Activated CD4-positive, alpha-beta T cell treated with anti-CD3 and anti-CD28 coated beads, Interleukin-2, amount 10 ng/mL, durations not matched to agents 7 days and 5 days (primary cell): ENCODE measurements at regions of chr1 and their contacts with region 1.

Region 1: DNA sequence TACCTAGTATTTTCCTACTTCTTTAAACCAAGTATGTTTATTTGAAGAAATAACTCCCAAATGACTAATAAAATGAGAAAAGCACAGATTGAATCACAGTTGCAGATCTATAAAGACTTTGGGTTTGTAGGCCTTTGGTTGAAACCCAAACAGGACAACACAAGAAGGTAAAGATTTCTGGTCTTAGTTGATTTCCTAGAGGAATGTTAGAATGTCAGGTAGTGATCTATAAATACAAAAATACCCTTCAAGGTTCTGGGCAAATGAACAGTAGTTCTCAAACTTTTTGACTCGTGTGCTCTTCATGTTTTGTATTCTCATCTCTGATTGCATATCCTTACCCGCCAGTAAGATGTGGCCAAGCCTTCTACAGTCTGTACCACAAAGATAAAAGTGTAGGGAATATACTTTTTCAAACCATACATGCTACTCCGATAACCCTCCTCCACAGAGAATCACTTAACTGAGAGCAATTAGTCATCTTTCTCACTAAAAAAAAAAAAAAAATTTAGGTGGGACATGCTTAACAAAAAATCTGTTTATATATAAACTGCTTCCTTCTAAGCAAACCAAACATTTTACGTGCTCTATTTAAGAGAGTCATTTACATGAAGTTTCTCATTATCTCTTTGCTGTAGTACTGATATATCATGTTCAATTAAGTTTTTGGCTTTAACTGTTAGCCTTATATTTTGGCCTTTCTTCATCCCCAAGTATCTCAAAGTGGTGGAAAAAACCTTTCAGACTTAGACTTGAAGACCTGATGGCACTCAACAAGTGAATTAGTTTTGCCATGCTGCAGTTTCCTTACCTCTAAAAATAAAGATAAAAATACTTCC is 36.0 kb downstream of the CNIH4 start:
- DNase-seq: no peak
- H3K4me3 Mint-ChIP-seq: no peak overlapping the region
- H3K27ac Mint-ChIP-seq: no peak overlapping the region
- H3K4me1 Mint-ChIP-seq: peaks cover 25% of the 10 kb centered on the region
- H3K27me3 Mint-ChIP-seq: no peaks in the 10 kb centered on the region

Region 2: DNA sequence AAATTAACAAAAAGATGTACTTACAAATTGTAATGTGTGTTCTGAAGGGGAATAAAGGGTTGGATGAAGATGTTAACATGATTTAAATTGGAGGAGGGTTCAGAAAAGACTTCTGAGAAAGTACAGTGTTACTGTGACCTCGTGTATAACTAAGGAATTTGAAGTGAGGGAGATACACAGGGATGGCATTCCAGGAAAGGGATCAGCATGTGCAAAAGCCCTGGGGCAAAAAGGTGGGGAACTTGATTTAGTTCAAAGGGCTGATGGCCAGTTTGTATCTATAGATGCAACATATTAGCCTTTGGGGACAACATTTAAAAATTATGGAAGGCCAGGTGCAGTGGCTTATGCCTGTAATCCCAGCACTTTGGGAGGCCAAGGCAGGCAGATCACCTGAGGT is 242.9 kb before region 1 on chr1:
- CTCF ChIA-PET with region 1: no interaction called
- POLR2A ChIA-PET with region 1: no interaction called
- DNase-seq: no peak
- H3K4me3 Mint-ChIP-seq: no peak overlapping the region
- H3K27ac Mint-ChIP-seq: no peak overlapping the region
- H3K4me1 Mint-ChIP-seq: peaks cover 19% of the 10 kb centered on the region
- H3K27me3 Mint-ChIP-seq: no peaks in the 10 kb centered on the region

Region 3: GRCh38 chr1:224203243-224204016 is 189.2 kb before region 1 on chr1:
- CTCF ChIA-PET with region 1: no interaction called
- POLR2A ChIA-PET with region 1: no interaction called
- DNase-seq: no peak
- H3K4me3 Mint-ChIP-seq: no peak overlapping the region
- H3K27ac Mint-ChIP-seq: peak overlapping the region; percentile 57
- H3K4me1 Mint-ChIP-seq: peaks cover 17% of the 10 kb centered on the region
- H3K27me3 Mint-ChIP-seq: no peaks in the 10 kb centered on the region

Region 4: DNA sequence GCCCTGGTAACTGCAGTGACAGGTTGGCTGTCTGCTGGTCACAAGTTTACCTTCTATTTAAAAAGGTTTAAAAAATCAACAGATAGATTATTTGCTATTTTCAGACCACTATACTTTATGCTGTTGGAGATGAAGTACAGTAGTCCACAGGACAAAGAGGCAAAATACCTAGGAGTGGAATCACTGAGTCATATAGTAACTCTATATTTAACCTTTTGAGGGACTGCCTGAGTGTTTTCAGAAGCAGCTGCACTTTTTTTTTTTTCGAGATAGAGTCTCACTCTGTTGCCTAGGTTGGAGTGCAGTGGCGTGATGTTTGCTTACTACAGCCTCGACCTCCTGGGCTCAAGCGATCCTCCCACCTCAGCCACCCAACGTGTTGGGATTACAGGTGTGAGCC is 24.2 kb before region 1 on chr1:
- CTCF ChIA-PET with region 1: no interaction called
- POLR2A ChIA-PET with region 1: no interaction called
- DNase-seq: no peak
- H3K4me3 Mint-ChIP-seq: no peak overlapping the region
- H3K27ac Mint-ChIP-seq: no peak overlapping the region
- H3K4me1 Mint-ChIP-seq: peaks cover 22% of the 10 kb centered on the region
- H3K27me3 Mint-ChIP-seq: no peaks in the 10 kb centered on the region

Region 5: DNA sequence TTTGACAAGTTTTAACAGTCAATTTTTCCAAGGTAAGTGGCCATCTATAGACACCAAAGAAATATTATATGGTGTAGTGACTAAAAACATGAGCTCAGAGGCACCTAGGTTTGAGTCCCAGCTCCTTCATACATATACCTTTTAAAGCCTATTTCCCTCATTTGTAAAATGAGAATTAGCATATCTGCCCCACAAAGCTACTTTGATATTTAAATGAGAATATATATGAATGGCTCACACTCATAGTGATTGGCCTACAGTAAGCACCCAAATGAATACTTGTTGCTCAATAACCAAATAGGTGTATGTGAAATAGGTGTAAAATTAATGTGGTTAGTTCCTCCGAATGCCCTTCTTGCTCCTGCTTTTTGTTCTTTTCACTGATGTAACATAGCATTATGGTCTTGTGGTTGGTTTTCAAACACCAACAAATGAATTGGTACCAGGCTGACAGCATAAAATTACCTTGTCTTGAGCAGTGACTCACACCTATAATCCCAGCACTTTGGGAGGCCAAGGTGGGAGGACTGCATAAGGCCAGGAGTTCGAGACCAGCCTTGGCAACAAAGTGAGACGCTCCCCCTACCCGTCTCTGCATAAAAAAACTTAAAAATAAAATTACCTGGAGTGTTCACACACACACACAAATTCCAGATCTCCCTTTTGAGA is 10.6 kb before region 1 on chr1:
- CTCF ChIA-PET with region 1: interaction called, 11 read pairs
- POLR2A ChIA-PET with region 1: interaction called, 3 read pairs
- DNase-seq: no peak
- H3K4me3 Mint-ChIP-seq: no peak overlapping the region
- H3K27ac Mint-ChIP-seq: peak overlapping the region; percentile 75
- H3K4me1 Mint-ChIP-seq: peaks cover 70% of the 10 kb centered on the region
- H3K27me3 Mint-ChIP-seq: no peaks in the 10 kb centered on the region